Heart right ventricle (tissue), 16 donors: ENCODE measurements at regions of chr4 and their contacts with region 1.

Region 1: GRCh38 chr4:8362483-8362882 is 78.0 kb downstream of the ACOX3 start:
- DNase-seq: no peak
- ATAC-seq: no peak
- H3K4me3 ChIP-seq: no peak overlapping the region
- H3K27ac ChIP-seq: no peak overlapping the region
- H3K4me1 ChIP-seq: peaks cover 0 to 25% (median 0%) of the 10 kb centered on the region in 9 donors
- H3K27me3 ChIP-seq: no peaks in the 10 kb centered on the region
- CTCF ChIP-seq: no peak

Region 2: GRCh38 chr4:6647582-6648230 is 1714.8 kb before region 1 on chr4:
- intact Hi-C with region 1: loop called in 1 of 10 experiments (anchors 5 kb)
- DNase-seq: no peak
- ATAC-seq: peak in 1 of 8 donors; percentile 30
- H3K4me3 ChIP-seq: no peak overlapping the region
- H3K27ac ChIP-seq: no peak overlapping the region
- H3K4me1 ChIP-seq: peaks cover 4 to 17% (median 14%) of the 10 kb centered on the region in 9 donors
- H3K27me3 ChIP-seq: no peaks in the 10 kb centered on the region
- CTCF ChIP-seq: no peak

Region 3: GRCh38 chr4:7823416-7823824 is 539.1 kb before region 1 on chr4:
- intact Hi-C with region 1: no loop called
- DNase-seq: peak; percentile 74 to 88
- ATAC-seq: peak; percentile 81 to 91 (median 85)
- H3K4me3 ChIP-seq: peak overlapping the region in 1 of 10 donors; percentile 9
- H3K27ac ChIP-seq: peak overlapping the region; percentile 30 to 94 (median 82)
- H3K4me1 ChIP-seq: peaks cover 4 to 68% (median 37%) of the 10 kb centered on the region in 9 donors
- H3K27me3 ChIP-seq: no peaks in the 10 kb centered on the region
- CTCF ChIP-seq: no peak

Region 4: GRCh38 chr4:8891646-8892555 is 529.4 kb after region 1 on chr4:
- intact Hi-C with region 1: loop called in 1 of 10 experiments (anchors 10 kb)
- DNase-seq: no peak
- ATAC-seq: no peak
- H3K4me3 ChIP-seq: no peak overlapping the region
- H3K27ac ChIP-seq: no peak overlapping the region
- H3K4me1 ChIP-seq: peaks cover 0 to 14% (median 3%) of the 10 kb centered on the region in 9 donors
- H3K27me3 ChIP-seq: peaks cover 28 to 100% (median 98%) of the 10 kb centered on the region in 7 donors
- CTCF ChIP-seq: no peak